ENCODE measurements at regions of chr21 and their contacts with region 1.

Region 1: GRCh38 chr21:32257962-32258785 is 20.7 kb downstream of the MIS18A start:
- DNase-seq: no peak

Region 2: GRCh38 chr21:31781737-31782136 is 476.4 kb before region 1 on chr21:
- intact Hi-C with region 1: loop called in 1 of 2 experiments (anchors 10 kb)
- DNase-seq: peak; percentile 83

Region 3: DNA sequence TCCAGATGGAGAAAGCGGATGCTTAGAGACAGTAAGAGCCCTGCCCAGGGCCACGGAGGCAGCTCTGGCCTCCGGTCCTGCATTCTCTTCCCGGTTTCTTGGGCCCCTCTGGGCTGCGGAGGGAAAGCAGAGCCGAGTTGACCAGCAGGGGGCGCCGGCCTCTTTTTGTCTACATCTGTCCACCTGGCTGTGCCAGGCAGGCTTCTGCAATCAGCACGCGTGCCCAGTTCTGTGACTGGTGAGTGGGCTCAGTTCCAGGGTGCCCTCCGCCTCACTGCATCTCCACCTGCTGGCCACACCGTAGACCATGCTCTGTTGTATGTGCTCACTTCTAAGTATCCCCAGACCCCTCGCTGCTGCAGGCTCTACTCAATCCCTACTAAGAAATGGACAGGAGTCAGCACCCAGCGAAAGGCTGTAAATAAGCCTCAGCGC is 392.1 kb before region 1 on chr21:
- intact Hi-C with region 1: loop called (anchors 5 kb)
- DNase-seq: peak; percentile 93

Region 4: GRCh38 chr21:32155226-32155625 is 102.9 kb before region 1 on chr21:
- intact Hi-C with region 1: no loop called
- DNase-seq: no peak

Region 5: DNA sequence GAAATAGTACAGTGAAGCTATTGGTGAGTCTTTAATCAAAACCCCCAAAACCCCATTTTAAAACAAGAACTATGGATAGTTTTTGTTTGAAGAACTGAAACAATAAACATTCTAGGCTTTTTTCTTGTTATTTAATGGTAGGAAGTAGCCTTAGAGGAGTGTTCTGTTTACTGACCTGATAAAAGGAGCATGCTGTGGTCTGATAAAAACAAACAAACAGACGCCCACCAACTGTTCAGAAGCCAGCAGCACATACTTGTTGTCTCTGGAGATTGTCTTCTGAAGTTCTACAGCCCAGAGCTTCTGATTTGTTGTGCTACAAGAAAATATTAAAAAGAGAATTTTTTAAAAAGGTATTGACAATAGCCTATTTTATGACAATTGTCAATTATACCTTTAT is 408.1 kb after region 1 on chr21:
- intact Hi-C with region 1: no loop called
- DNase-seq: no peak